Head of caudate nucleus (tissue), 42 donors: ENCODE measurements at regions of chr15 and their contacts with region 1.

Region 1: DNA sequence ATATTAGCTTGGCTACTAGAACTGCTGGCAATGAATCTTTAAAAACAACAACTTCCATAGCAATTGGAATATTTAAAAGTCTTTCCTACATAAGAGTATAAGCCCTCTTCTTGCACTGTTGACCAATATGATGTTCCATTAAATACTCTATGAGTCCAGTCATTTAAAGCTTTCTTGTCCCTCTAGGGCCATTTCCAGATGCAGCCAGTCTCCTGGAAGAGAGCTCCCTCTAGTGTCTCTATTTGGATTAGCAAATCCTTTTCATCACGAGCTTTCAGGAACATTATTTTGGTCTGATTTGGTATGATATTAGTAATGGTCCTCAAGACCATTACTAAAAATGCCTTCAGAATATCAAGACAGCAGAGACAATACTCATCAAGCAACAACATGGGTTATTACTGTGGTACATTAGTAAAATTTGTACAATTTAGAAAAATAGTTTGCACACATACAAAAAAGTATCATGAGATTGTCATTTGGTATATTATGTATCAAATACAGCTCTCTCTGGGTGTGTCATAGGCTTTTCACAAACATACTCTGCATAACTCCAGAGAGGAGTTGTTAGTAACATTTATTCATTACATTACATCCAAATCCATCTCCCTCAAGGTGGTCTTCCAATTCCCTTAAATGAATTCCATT is 101.3 kb downstream of the DPH6 start:
- DNase-seq: peak in 8 of 42 donors; percentile 2 to 51 (median 9)

Region 2: GRCh38 chr15:35078221-35078915 is 366.3 kb before region 1 on chr15:
- intact Hi-C with region 1: loop called (anchors 10 kb)
- DNase-seq: peak in 38 of 42 donors; percentile 10 to 78 (median 49)

Region 3: GRCh38 chr15:35293353-35294130 is 151.1 kb before region 1 on chr15:
- intact Hi-C with region 1: loop called (anchors 10 kb)
- DNase-seq: no peak